Adrenal gland (tissue), 19 donors: ENCODE measurements at regions of chr4 and their contacts with region 1.

Region 1: GRCh38 chr4:38189445-38189844 is 229.2 kb downstream of the PTTG2 start:
- DNase-seq: peak in 6 of 7 donors; percentile 47 to 63 (median 52)
- H3K4me3 ChIP-seq: no peak overlapping the region
- H3K27ac ChIP-seq: peak overlapping the region in 1 of 5 donors; percentile 58
- H3K4me1 ChIP-seq: peaks cover 6 to 9% of the 10 kb centered on the region in 2 donors
- H3K27me3 ChIP-seq: no peaks in the 10 kb centered on the region
- CTCF ChIP-seq: no peak
- POLR2A ChIP-seq: no peak

Region 2: DNA sequence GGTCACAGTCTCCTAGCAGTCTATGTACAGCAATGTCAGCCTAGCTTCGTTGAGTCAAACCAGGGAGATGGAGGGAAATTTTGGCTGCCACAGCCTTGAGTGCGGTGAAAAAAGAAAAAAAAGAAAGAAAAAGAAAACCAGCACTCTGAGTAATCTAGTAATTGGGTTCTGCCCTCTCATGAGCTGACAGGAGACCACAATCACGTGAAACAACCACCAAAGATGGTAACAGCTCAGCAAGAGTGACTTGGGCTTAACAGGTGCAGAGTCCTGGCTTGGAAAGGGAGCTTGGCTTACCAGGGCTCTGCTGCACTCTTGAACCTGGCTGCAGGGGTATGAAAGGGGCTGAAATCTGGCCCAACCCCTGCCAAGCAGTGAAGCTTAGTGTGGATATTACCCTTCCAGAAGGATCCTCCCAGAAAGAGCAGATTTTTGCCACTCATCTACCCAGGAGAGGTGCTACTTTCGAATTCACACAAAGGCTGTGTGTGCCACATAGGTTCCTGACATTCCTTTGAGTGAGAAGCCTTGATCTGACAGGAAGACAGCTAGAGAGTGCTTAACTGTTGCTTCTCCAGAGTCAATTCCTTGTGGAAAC is 121.1 kb after region 1 on chr4:
- intact Hi-C with region 1: loop called (anchors 5 to 10 kb)
- DNase-seq: no peak
- H3K4me3 ChIP-seq: no peak overlapping the region
- H3K27ac ChIP-seq: no peak overlapping the region
- H3K4me1 ChIP-seq: no peaks in the 10 kb centered on the region
- H3K27me3 ChIP-seq: no peaks in the 10 kb centered on the region
- CTCF ChIP-seq: no peak
- POLR2A ChIP-seq: no peak